ENCODE measurements at regions of chr6 and their contacts with region 1.

Region 1: GRCh38 chr6:137341681-137342195 is 122.6 kb upstream of the IFNGR1 start:
- DNase-seq: peak; percentile 38
- H3K4me3 ChIP-seq: no peak overlapping the region
- H3K27ac ChIP-seq: no peak overlapping the region
- H3K4me1 ChIP-seq: no peaks in the 10 kb centered on the region
- H3K27me3 ChIP-seq: no peaks in the 10 kb centered on the region
- CTCF ChIP-seq: peak; percentile 18

Region 2: DNA sequence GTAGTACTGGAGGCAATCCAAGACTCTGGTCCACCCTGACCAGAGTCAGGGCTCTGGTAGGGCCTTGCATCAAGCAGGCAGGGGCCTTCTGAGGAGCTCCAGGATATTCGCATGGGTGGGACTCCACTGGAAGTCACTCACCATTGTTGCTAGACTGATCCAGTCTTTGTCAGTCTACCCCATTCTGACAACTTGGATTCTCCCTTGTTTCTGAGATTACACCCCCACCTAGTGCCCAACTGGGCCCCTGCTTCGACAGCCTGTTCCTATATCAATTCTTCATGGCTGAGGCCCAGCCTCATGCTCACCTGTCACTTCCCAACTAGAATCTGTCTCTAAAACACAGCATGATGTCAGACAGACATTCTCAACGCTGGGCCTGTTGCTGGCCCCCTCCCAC is 414.4 kb before region 1 on chr6:
- intact Hi-C with region 1: no loop called
- DNase-seq: no peak
- H3K4me3 ChIP-seq: no peak overlapping the region
- H3K27ac ChIP-seq: no peak overlapping the region
- H3K4me1 ChIP-seq: no peaks in the 10 kb centered on the region
- H3K27me3 ChIP-seq: peaks cover 16% of the 10 kb centered on the region
- CTCF ChIP-seq: no peak

Region 3: GRCh38 chr6:137415127-137415833 is 73.5 kb after region 1 on chr6:
- intact Hi-C with region 1: loop called (anchors 5 kb)
- DNase-seq: peak; percentile 69
- H3K4me3 ChIP-seq: peak overlapping the region; percentile 30
- H3K27ac ChIP-seq: no peak overlapping the region
- H3K4me1 ChIP-seq: no peaks in the 10 kb centered on the region
- H3K27me3 ChIP-seq: no peaks in the 10 kb centered on the region
- CTCF ChIP-seq: peak; percentile 69

Region 4: DNA sequence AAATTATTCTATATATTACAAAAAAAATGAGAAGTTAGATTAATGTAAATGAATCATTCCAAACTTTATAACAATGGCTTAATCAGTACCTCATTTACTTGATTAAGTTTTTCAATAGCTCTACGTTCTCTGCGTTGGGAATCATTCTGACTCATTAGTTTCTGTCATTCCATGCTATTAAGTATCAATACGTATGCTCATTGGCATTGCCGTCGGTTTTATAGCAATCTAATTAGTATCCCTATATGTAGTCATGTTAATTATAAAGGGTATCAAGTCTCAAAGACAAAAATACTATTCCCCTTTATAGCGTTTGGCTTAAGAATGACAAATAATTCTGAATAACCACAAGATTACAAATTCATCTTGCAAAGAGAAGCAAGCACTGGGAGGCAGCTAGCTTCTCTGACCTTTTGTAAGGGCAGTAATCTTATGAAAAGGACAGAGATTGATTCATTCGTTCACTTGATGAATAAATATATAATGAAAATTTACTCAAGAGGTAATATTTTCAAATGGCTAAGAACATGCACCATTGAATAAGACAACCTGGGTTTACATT is 110.7 kb after region 1 on chr6:
- intact Hi-C with region 1: no loop called
- DNase-seq: no peak
- H3K4me3 ChIP-seq: no peak overlapping the region
- H3K27ac ChIP-seq: no peak overlapping the region
- H3K4me1 ChIP-seq: no peaks in the 10 kb centered on the region
- H3K27me3 ChIP-seq: no peaks in the 10 kb centered on the region
- CTCF ChIP-seq: no peak

Region 5: GRCh38 chr6:137903933-137904821 is 562.4 kb after region 1 on chr6:
- intact Hi-C with region 1: no loop called
- DNase-seq: no peak
- H3K4me3 ChIP-seq: no peak overlapping the region
- H3K27ac ChIP-seq: no peak overlapping the region
- H3K4me1 ChIP-seq: no peaks in the 10 kb centered on the region
- H3K27me3 ChIP-seq: no peaks in the 10 kb centered on the region
- CTCF ChIP-seq: no peak

Measured in colonic mucosa (tissue), 4 donors.